ENCODE measurements at regions of chr12 and their contacts with region 1.

Region 1: GRCh38 chr12:125402874-125403789 is 337.9 kb downstream of the AACS start:
- DNase-seq: peak; percentile 62
- H3K4me3 ChIP-seq: no peak overlapping the region
- H3K27ac ChIP-seq: no peak overlapping the region
- H3K4me1 ChIP-seq: no peaks in the 10 kb centered on the region
- H3K27me3 ChIP-seq: peaks cover 5% of the 10 kb centered on the region
- CTCF ChIP-seq: peak; percentile 79

Region 2: GRCh38 chr12:125183187-125184067 is 219.7 kb before region 1 on chr12:
- CTCF ChIA-PET with region 1: interaction called, 7 read pairs
- POLR2A ChIA-PET with region 1: no interaction called
- intact Hi-C with region 1: loop called (anchors 1 kb)
- DNase-seq: peak; percentile 89
- H3K4me3 ChIP-seq: no peak overlapping the region
- H3K27ac ChIP-seq: no peak overlapping the region
- H3K4me1 ChIP-seq: peaks cover 31% of the 10 kb centered on the region
- H3K27me3 ChIP-seq: peaks cover 27% of the 10 kb centered on the region
- CTCF ChIP-seq: peak; percentile 99

Region 3: GRCh38 chr12:125240717-125241116 is 162.4 kb before region 1 on chr12:
- CTCF ChIA-PET with region 1: no interaction called
- POLR2A ChIA-PET with region 1: no interaction called
- intact Hi-C with region 1: loop called (anchors 2 kb)
- DNase-seq: no peak
- H3K4me3 ChIP-seq: no peak overlapping the region
- H3K27ac ChIP-seq: no peak overlapping the region
- H3K4me1 ChIP-seq: peaks cover 3% of the 10 kb centered on the region
- H3K27me3 ChIP-seq: no peaks in the 10 kb centered on the region
- CTCF ChIP-seq: no peak

Region 4: GRCh38 chr12:125330645-125331341 is 72.3 kb before region 1 on chr12:
- CTCF ChIA-PET with region 1: interaction called, 9 read pairs
- POLR2A ChIA-PET with region 1: no interaction called
- intact Hi-C with region 1: loop called (anchors 1 kb)
- DNase-seq: peak; percentile 71
- H3K4me3 ChIP-seq: peak overlapping the region; percentile 51
- H3K27ac ChIP-seq: no peak overlapping the region
- H3K4me1 ChIP-seq: peaks cover 4% of the 10 kb centered on the region
- H3K27me3 ChIP-seq: no peaks in the 10 kb centered on the region
- CTCF ChIP-seq: peak; percentile 87

Measured in A673 (cell line).